ENCODE measurements at regions of chr19 and their contacts with region 1.

Region 1: GRCh38 chr19:47863514-47863936 is 4.5 kb downstream of the TPRX2 start:
- DNase-seq: peak; percentile 94
- ATAC-seq: peak; percentile 98
- H3K4me3 Mint-ChIP-seq: no peak overlapping the region
- H3K27ac Mint-ChIP-seq: no peak overlapping the region
- H3K4me1 Mint-ChIP-seq: no peaks in the 10 kb centered on the region
- H3K27me3 Mint-ChIP-seq: peaks cover 11% of the 10 kb centered on the region

Region 2: DNA sequence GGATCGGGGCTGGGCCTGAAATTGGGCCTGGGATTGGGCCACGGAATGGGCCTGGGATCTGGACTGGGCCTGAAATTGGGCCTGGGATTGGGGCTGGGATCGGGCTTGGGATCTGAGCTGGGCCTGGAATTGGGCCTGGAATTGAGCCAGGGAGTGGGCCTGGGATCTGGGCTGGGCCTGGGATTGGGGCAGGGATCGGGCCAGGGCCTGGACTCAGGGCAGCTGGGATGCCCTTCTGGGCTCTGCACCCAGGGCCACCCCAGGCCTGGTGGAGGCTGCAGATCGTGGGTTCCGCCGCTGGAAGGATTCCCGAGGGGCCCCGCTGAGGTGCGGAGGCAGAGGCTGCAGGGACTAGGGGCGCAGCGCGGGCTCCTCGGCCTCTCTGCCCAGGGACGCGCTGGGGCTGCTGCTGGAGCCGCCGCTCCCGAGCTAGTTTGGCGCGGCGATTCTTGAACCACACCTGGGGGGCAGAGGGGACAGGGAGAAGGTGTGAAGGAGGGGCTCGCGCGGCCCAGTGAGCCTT is 60.9 kb before region 1 on chr19:
- CTCF ChIA-PET with region 1: no interaction called
- POLR2A ChIA-PET with region 1: no interaction called
- intact Hi-C with region 1: no loop called
- DNase-seq: no peak
- ATAC-seq: no peak
- H3K4me3 Mint-ChIP-seq: no peak overlapping the region
- H3K27ac Mint-ChIP-seq: no peak overlapping the region
- H3K4me1 Mint-ChIP-seq: no peaks in the 10 kb centered on the region
- H3K27me3 Mint-ChIP-seq: peaks cover 3% of the 10 kb centered on the region

Region 3: GRCh38 chr19:47813304-47814004 is 50.1 kb before region 1 on chr19:
- CTCF ChIA-PET with region 1: interaction called, 8 read pairs
- POLR2A ChIA-PET with region 1: no interaction called
- intact Hi-C with region 1: loop called (anchors 1 kb)
- DNase-seq: peak; percentile 89
- ATAC-seq: peak; percentile 85
- H3K4me3 Mint-ChIP-seq: no peak overlapping the region
- H3K27ac Mint-ChIP-seq: no peak overlapping the region
- H3K4me1 Mint-ChIP-seq: peaks cover 2% of the 10 kb centered on the region
- H3K27me3 Mint-ChIP-seq: peaks cover 7% of the 10 kb centered on the region

Region 4: GRCh38 chr19:47848823-47849473 is 14.6 kb before region 1 on chr19:
- CTCF ChIA-PET with region 1: interaction called, 18 read pairs
- POLR2A ChIA-PET with region 1: interaction called, 3 read pairs
- intact Hi-C with region 1: loop called (anchors 1 kb)
- DNase-seq: peak; percentile 79
- ATAC-seq: peak; percentile 19
- H3K4me3 Mint-ChIP-seq: peak overlapping the region; percentile 47
- H3K27ac Mint-ChIP-seq: no peak overlapping the region
- H3K4me1 Mint-ChIP-seq: peaks cover 8% of the 10 kb centered on the region
- H3K27me3 Mint-ChIP-seq: peaks cover 40% of the 10 kb centered on the region

Region 5: DNA sequence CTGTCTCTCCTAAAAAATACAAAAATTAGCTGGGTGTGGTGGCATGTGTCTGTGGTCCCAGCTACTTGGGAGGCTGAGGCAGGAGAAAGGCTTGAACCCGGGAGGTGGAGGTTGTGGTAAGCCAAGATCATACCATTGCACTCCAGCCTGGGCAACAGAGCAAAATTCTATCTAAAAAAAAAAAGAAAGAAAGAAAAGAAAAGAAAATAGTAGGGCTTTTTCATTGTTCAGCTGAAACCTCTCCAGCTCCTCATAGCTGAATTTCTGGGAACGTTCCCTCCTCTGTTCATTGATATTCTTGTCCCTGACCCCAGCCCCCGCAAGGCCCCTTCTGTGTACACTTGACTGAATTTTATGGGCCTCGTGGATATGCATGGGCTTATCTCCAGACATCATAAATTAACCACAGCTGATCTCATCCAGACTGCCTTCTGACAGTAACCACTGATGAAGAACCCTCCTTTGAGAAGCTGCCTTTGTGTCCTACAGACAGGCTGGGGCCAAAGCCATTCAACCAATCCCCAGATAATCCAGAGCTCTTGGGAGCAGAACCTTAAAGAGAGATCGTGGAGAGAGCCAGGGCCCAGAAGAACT is 130.8 kb after region 1 on chr19 and contains the start of gene ELSPBP1:
- CTCF ChIA-PET with region 1: no interaction called
- POLR2A ChIA-PET with region 1: no interaction called
- intact Hi-C with region 1: no loop called
- DNase-seq: no peak
- ATAC-seq: no peak
- H3K4me3 Mint-ChIP-seq: no peak within 1 kb of the TSS
- H3K27ac Mint-ChIP-seq: no peak within 1 kb of the TSS
- H3K4me1 Mint-ChIP-seq: no peaks in the 10 kb centered on the region
- H3K27me3 Mint-ChIP-seq: peaks cover 23% of the 10 kb centered on the region
- total RNA-seq, gene ELSPBP1: not detected

Region 6: GRCh38 chr19:48006762-48007161 is 143.2 kb after region 1 on chr19:
- CTCF ChIA-PET with region 1: no interaction called
- POLR2A ChIA-PET with region 1: no interaction called
- intact Hi-C with region 1: no loop called
- DNase-seq: peak; percentile 30
- ATAC-seq: no peak
- H3K4me3 Mint-ChIP-seq: no peak overlapping the region
- H3K27ac Mint-ChIP-seq: no peak overlapping the region
- H3K4me1 Mint-ChIP-seq: no peaks in the 10 kb centered on the region
- H3K27me3 Mint-ChIP-seq: peaks cover 19% of the 10 kb centered on the region

Region 7: GRCh38 chr19:48461982-48462655 is 598.6 kb after region 1 on chr19:
- CTCF ChIA-PET with region 1: no interaction called
- POLR2A ChIA-PET with region 1: no interaction called
- intact Hi-C with region 1: no loop called
- DNase-seq: peak; percentile 43
- ATAC-seq: peak; percentile 60
- H3K4me3 Mint-ChIP-seq: no peak overlapping the region
- H3K27ac Mint-ChIP-seq: no peak overlapping the region
- H3K4me1 Mint-ChIP-seq: peaks cover 2% of the 10 kb centered on the region
- H3K27me3 Mint-ChIP-seq: no peaks in the 10 kb centered on the region